Left ventricle myocardium inferior (tissue), 1 donor: ENCODE measurements at regions of chr11 and their contacts with region 1.

Region 1: GRCh38 chr11:33161120-33162005 is at the start of gene CSTF3:
- DNase-seq: peak; percentile 100
- H3K4me3 ChIP-seq: peak within 1 kb of the TSS; percentile 87
- H3K27ac ChIP-seq: peak within 1 kb of the TSS; percentile 76
- H3K4me1 ChIP-seq: peaks cover 51% of the 10 kb centered on the region
- H3K27me3 ChIP-seq: no peaks in the 10 kb centered on the region
- CTCF ChIP-seq: peak; percentile 73
- total RNA-seq, gene CSTF3: 11.1 TPM

Region 2: DNA sequence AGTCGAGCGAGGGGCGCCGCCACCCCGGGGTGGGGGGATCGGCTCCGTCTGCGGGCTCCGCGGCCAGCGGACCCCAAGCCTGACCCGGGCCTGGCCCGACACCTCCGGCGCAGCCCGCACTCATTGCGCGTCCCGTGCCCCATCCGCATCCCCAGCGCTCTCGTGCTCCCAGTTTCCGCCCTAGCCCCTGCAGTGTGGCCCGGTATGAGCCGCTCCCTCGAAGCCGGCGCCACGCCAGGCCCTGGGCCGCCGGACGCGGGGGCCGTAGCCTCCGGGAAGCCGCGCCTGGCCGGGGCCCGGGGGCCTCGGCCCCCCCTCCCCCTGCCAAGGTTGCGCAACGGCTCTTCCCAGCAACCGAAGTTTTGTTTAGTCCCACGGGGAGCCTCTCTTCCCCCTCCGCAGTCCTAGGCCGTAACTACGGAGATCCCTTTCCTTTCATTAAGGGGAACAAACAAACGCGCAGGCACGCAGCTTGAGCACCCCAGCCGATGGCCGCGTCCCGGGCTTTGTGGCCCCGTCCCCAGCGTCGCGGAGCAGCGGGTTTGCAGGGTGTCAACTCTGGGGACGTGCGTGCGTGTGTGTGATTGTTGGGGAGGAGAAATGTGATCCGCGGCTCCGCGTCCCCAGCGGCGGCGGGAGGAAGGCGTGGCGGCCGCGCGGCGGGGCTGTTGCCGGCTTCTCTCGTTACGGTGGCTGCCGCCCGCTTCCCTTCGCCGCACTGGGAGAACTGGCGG is 96.7 kb after region 1 on chr11:
- intact Hi-C with region 1: loop called (anchors 10 kb)
- DNase-seq: peak; percentile 91
- H3K4me3 ChIP-seq: peak overlapping the region; percentile 98
- H3K27ac ChIP-seq: peak overlapping the region; percentile 100
- H3K4me1 ChIP-seq: peaks cover 64% of the 10 kb centered on the region
- H3K27me3 ChIP-seq: no peaks in the 10 kb centered on the region
- CTCF ChIP-seq: peak; percentile 62

Region 3: DNA sequence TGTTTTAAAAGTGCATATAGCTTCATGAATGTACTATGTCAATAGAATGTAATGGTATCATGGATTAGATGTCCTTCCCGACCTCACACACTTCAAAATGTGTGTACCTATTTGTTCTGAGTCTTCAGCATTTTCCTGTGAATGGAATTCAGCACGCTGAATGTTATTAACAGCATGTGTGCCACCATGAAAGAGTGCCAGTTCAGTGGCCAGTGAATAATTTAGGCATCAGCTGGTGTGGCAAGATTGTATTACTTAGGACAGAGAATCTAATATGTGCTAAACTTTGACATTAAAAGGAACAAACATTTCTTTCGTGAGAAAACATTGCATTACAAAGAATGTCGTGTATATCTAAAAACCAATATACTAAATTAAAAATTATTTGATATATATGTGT is 142.2 kb after region 1 on chr11:
- intact Hi-C with region 1: no loop called
- DNase-seq: no peak
- H3K4me3 ChIP-seq: no peak overlapping the region
- H3K27ac ChIP-seq: peak overlapping the region; percentile 53
- H3K4me1 ChIP-seq: peaks cover 83% of the 10 kb centered on the region
- H3K27me3 ChIP-seq: no peaks in the 10 kb centered on the region
- CTCF ChIP-seq: no peak